ENCODE measurements at regions of chr11 and their contacts with region 1.

Region 1: GRCh38 chr11:126440792-126441514 is 85.5 kb downstream of the ST3GAL4 start:
- DNase-seq: peak; percentile 49
- H3K4me3 ChIP-seq: no peak overlapping the region
- H3K27ac ChIP-seq: no peak overlapping the region
- H3K4me1 ChIP-seq: no peaks in the 10 kb centered on the region
- H3K27me3 ChIP-seq: no peaks in the 10 kb centered on the region
- CTCF ChIP-seq: peak; percentile 87 to 93

Region 2: DNA sequence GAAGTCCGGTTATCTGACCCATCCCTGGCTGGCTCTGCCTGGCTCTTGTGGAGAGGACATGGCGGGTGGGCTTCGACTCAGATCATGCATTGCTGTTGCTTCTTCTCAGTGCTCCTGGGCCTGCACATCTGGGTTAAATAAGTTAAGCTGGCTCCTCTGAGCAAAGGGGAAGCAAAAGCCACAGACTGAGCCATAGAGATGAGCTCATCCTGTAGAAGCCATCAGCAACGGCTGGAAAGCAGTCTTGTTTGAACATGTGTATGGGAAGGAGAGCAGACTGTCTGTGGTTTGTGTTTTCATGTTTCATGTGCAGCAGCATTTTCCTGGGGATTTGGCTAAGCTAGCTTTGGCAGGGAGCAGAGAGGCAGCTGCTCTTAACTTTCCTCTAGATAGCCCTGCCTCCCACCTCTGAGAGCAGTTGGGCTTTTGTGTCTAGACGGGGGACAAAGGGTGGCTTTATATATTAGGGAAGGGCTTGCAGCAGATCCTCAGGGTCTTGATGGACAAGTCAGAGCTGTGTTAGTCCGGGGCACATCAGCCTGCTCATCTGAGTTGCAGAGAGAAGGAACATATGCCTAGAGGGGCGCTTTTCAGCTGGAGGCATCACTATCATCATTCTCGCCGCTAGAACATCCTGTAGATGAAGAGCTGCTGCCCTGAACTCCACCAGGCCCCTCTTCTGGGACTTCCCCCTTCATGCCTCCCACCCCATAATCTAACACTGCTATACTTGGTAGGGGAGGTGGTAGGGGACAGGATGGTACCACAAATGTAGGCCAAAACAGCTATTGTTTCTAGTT is 122.2 kb before region 1 on chr11:
- CTCF ChIA-PET with region 1: no interaction called
- dilution Hi-C with region 1: no loop called
- in situ Hi-C with region 1: no loop called
- intact Hi-C with region 1: loop called (anchors 2 kb)
- DNase-seq: peak; percentile 96
- H3K4me3 ChIP-seq: peak overlapping the region; percentile 2 to 43 (median 26)
- H3K27ac ChIP-seq: peak overlapping the region; percentile 80
- H3K4me1 ChIP-seq: peaks cover 32% of the 10 kb centered on the region
- H3K27me3 ChIP-seq: no peaks in the 10 kb centered on the region
- CTCF ChIP-seq: no peak

Region 3: GRCh38 chr11:127493330-127494022 is 1052.5 kb after region 1 on chr11:
- CTCF ChIA-PET with region 1: no interaction called
- dilution Hi-C with region 1: no loop called
- in situ Hi-C with region 1: no loop called
- intact Hi-C with region 1: loop called (anchors 10 kb)
- DNase-seq: peak; percentile 4
- H3K4me3 ChIP-seq: no peak overlapping the region
- H3K27ac ChIP-seq: no peak overlapping the region
- H3K4me1 ChIP-seq: no peaks in the 10 kb centered on the region
- H3K27me3 ChIP-seq: peaks cover 5% of the 10 kb centered on the region
- CTCF ChIP-seq: peak; percentile 34 to 51

Region 4: GRCh38 chr11:128021349-128022006 is 1580.5 kb after region 1 on chr11:
- CTCF ChIA-PET with region 1: no interaction called
- dilution Hi-C with region 1: no loop called
- in situ Hi-C with region 1: no loop called
- intact Hi-C with region 1: loop called (anchors 5 kb)
- DNase-seq: no peak
- H3K4me3 ChIP-seq: no peak overlapping the region
- H3K27ac ChIP-seq: no peak overlapping the region
- H3K4me1 ChIP-seq: peaks cover 27% of the 10 kb centered on the region
- H3K27me3 ChIP-seq: no peaks in the 10 kb centered on the region
- CTCF ChIP-seq: peak; percentile 23 to 50